ENCODE measurements at regions of chr19 and their contacts with region 1.

Region 1: DNA sequence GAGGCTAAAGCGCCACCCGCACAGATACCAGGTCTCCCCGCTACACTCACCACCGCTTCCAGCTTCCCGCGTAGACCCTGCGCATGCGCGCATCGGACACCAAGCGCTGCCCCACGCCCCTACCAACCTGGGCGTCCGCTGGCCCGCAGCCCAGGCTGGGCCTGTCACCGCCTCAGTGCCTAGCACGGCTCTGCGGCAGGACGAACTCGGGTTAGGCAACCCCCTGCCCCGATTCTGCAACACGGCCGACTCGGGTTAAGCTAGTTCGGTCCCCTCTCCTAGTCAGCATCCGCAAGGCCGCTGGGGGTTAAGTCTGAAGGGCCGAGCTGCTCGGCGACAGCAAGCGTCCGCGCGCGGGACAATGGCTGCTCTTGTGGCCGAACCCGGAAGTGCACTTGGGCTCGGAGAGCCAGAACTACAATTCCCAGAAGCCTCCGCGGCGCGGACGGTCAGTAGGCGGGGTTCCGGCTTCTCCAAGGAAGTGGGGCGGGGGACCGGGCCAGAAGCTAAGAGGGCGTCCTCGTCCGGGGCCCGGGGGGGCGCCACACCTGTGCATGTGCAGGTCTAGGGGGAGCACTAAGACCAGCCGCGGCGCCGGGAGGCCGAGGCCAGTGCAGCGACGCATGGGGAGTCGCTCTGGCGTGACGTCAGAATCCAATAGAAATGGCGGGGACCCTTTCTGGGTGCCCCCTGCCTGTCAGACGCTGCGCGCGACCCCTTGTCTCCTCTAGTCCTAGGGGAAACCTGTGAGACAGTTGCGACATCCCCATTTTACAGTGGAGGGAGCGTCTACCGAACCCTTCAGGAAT is at the start of gene ZNF180:
- DNase-seq: peak; percentile 97
- ATAC-seq: peak; percentile 88
- H3K4me3 Mint-ChIP-seq: peak within 1 kb of the TSS; percentile 91
- H3K27ac Mint-ChIP-seq: peak within 1 kb of the TSS; percentile 94
- H3K4me1 Mint-ChIP-seq: peaks cover 28% of the 10 kb centered on the region
- H3K27me3 Mint-ChIP-seq: peaks cover 5% of the 10 kb centered on the region
- total RNA-seq, gene ZNF180: 5.5 to 7.7 TPM

Region 2: DNA sequence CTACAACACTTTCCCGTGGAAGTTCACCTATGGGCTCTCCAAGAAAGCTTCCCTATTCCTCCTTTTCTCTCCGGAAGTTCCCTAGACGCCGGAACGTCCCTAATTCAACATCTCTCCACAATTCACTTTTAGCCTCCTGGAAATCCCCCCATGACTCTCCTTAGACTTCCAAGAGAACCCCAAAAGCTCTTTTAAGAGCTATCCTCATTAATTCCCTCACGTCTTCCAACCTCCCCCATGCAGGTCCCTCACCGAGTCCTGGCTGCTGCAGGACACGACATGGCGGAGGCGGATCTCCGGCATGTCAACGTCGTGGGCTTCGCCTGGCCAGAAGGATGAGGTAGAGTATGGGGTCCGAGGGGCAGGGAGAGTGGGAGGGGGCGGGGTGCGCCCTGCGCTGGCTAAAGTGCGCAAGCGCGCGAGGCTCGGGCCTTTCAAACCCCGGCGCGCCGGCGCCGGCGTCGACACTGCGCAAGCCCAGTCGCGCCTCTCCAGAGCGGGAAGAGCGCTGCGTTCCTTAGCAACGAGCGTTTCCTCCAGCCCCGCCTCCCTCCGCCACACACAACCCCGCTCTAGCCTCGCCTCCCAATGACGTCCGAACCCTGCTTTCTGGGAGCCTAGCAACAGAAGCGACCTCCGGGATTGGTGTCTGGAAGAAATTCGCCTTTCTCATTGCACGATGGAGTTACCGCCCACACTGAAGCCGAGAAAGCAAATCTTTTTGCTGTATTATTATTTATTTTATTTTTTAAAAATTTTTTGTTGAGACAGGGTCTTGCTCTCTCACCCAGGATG is 925.0 kb before region 1 on chr19 and contains the starts of genes PINLYP and XRCC1:
- CTCF ChIA-PET with region 1: no interaction called
- POLR2A ChIA-PET with region 1: no interaction called
- intact Hi-C with region 1: no loop called
- DNase-seq: peak; percentile 99
- ATAC-seq: peak; percentile 99
- H3K4me3 Mint-ChIP-seq: peak within 1 kb of the TSS; percentile 87
- H3K27ac Mint-ChIP-seq: peak within 1 kb of the TSS; percentile 94
- H3K4me1 Mint-ChIP-seq: peaks cover 41% of the 10 kb centered on the region
- H3K27me3 Mint-ChIP-seq: no peaks in the 10 kb centered on the region
- total RNA-seq, gene PINLYP: 3.5 to 3.6 TPM
- total RNA-seq, gene XRCC1: 31.6 to 40.0 TPM

Region 3: DNA sequence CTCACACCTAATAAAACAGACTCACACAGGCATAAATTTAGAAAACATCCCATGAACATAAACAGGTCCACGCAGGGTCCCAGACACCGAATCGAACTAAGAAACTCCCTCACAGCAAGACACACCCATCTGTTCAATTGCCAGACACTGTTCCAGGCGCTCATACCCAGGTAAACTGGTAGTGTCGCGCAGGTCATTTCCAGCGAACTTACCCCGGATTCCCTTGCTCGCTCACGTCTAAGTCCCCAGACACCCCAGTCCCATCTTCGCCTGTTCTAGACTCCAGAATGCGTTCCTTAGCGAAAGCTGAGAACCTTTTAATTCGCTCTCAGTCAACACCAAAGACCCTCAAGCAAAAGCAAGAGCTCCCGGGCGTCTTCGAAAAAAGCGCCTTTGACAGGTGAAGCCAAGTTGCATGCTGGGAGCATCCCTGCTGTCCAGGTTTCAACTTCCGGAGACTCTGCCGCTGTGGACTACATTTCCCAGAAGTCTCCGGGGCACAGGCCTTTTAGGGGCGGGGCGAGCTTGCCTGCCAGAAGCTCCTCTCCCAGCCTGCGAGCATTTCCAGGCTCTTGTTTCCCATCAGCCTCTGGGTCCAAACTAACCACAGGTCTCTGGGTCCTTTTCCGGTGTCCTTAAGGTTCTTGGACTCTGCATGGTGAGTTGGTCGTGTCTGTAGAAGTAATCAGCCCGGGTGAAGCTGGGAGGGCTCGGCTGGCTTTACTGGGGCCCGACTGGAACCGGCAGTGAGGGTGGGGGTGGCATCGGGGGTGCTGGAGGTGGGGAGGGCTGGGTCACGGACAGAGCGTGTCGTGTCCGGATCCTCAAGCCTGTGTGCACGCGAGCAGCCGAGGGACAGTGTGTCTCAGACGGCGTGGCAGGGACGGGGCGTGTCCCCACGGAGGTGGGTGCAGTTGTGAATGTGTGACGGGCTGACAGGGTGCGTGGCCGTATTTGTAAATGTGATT is 673.3 kb before region 1 on chr19 and contains the start of gene ZNF283:
- CTCF ChIA-PET with region 1: no interaction called
- POLR2A ChIA-PET with region 1: no interaction called
- intact Hi-C with region 1: loop called in 1 of 2 experiments (anchors 1 kb)
- DNase-seq: peak; percentile 92
- ATAC-seq: peak; percentile 99
- H3K4me3 Mint-ChIP-seq: peak within 1 kb of the TSS; percentile 87
- H3K27ac Mint-ChIP-seq: peak within 1 kb of the TSS; percentile 60
- H3K4me1 Mint-ChIP-seq: peaks cover 14% of the 10 kb centered on the region
- H3K27me3 Mint-ChIP-seq: peaks cover 5% of the 10 kb centered on the region
- total RNA-seq, gene ZNF283: 5.4 to 6.8 TPM

Region 4: DNA sequence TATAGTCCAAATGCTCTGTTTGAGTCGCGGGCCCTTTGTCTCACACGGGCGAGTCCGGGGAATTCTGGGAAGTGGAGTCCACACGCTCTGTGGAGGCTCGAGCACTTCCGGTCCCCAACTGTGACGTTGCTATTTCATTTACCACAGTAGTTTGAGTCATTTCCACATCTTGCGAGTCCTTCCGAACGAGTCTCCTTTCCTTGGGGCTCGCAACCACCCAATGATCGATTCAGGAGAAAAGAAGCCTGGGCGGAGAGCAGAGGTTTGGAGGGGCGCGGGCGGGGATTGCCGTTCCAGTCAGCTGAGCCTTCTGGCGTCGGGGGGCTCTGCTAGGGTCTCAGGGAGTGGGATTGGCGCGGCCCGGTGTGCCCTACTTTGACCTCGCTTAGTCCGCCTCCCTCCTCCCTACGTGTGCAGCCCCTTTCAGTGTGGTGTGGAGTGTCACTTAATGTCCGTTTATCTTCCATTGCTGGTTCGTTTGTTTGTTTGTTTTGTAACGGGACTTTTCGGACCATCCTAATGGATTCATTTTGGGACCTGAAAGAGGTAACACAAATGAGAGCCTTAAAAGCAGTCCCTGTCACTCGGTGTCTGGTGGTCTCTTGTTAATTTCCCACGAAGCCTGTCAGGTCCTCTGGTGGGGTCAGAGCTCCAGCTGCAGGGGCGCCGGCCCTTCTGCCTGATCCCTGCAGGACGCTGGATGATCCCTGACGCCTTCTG is 475.0 kb before region 1 on chr19 and contains the start of gene ZNF222:
- CTCF ChIA-PET with region 1: no interaction called
- POLR2A ChIA-PET with region 1: no interaction called
- intact Hi-C with region 1: loop called in 1 of 2 experiments (anchors 1 kb)
- DNase-seq: peak; percentile 90
- ATAC-seq: peak; percentile 99
- H3K4me3 Mint-ChIP-seq: peak within 1 kb of the TSS; percentile 94
- H3K27ac Mint-ChIP-seq: peak within 1 kb of the TSS; percentile 93
- H3K4me1 Mint-ChIP-seq: peaks cover 20% of the 10 kb centered on the region
- H3K27me3 Mint-ChIP-seq: peaks cover 2% of the 10 kb centered on the region
- total RNA-seq, gene ZNF222: 1.5 to 2.9 TPM

Region 5: GRCh38 chr19:44141191-44142058 is 358.9 kb before region 1 on chr19 and contains the start of gene ZNF234:
- CTCF ChIA-PET with region 1: no interaction called
- POLR2A ChIA-PET with region 1: no interaction called
- intact Hi-C with region 1: loop called in 1 of 2 experiments (anchors 1 kb)
- DNase-seq: peak; percentile 82
- ATAC-seq: peak; percentile 92
- H3K4me3 Mint-ChIP-seq: peak within 1 kb of the TSS; percentile 92
- H3K27ac Mint-ChIP-seq: peak within 1 kb of the TSS; percentile 94
- H3K4me1 Mint-ChIP-seq: peaks cover 12% of the 10 kb centered on the region
- H3K27me3 Mint-ChIP-seq: no peaks in the 10 kb centered on the region
- total RNA-seq, gene ZNF234: 7.9 to 10.4 TPM

Region 6: DNA sequence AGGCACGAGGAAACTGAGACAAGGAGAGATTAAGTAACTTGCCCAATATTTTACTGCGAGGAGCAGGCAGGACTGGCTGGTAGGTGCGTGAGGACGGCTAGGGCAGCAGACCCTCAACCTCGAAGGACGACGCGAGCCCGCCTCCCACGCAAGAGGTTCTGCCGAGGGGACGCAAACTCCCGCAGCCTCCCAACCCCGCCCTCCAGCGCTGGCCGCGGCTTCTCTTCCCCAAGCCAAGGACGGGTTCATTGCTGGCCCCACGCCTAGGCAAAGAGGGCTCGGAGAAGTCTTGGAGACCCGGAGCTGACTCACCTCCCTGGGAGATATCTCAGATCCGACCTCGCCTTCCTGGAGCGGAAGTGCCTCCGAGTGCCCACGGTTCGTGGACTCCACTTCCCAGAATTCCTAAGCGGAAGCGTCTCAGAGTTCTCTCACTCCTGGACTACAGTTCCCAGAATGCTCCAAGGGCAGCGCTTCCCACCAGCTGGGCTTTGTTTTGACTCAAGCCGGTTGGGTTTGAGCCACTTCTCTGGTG is 195.6 kb before region 1 on chr19 and contains the start of gene ZNF235:
- CTCF ChIA-PET with region 1: no interaction called
- POLR2A ChIA-PET with region 1: no interaction called
- intact Hi-C with region 1: loop called in 1 of 2 experiments (anchors 1 kb)
- DNase-seq: peak; percentile 87
- ATAC-seq: peak; percentile 97
- H3K4me3 Mint-ChIP-seq: peak within 1 kb of the TSS; percentile 83
- H3K27ac Mint-ChIP-seq: peak within 1 kb of the TSS; percentile 64
- H3K4me1 Mint-ChIP-seq: peaks cover 12% of the 10 kb centered on the region
- H3K27me3 Mint-ChIP-seq: no peaks in the 10 kb centered on the region
- total RNA-seq, gene ZNF235: 2.1 to 2.7 TPM

Region 7: DNA sequence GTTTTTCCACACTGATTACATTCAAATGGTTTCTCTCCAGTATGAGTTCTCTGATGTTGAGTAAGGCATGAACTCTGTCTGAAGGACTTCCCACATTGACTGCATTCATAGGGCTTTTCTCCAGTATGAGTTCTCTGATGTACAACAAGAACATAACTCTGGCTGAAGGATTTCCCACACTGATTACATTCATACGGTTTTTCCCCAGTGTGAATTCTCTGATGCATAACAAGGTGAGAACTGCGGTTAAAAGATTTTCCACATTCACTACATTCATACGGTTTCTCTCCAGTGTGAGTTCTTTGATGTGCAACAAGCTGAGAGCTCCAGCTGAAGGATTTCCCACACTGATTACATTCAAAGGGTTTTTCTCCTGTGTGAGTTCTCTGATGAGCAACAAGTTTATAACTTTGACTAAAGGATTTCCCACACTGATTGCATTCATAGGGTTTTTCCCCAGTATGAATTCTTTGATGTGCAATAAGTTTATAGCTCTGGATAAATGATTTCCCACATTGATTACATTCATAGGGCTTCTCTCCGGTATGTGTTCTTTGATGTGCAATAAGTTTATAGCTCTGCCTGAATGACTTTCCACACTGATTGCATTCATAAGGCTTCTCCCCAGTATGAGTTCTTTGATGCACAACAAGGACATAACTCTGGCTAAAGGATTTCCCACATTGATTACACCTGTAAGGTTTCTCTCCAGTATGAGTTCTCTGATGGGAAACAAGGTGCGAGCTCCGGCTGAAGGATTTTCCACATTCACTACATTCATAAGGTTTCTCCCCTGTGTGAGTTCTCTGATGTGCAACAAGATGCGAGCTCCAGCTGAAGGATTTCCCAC is 23.6 kb before region 1 on chr19:
- CTCF ChIA-PET with region 1: no interaction called
- POLR2A ChIA-PET with region 1: interaction called, 3 read pairs
- intact Hi-C with region 1: loop called in 1 of 2 experiments (anchors 2 kb)
- DNase-seq: no peak
- ATAC-seq: no peak
- H3K4me3 Mint-ChIP-seq: no peak overlapping the region
- H3K27ac Mint-ChIP-seq: no peak overlapping the region
- H3K4me1 Mint-ChIP-seq: no peaks in the 10 kb centered on the region
- H3K27me3 Mint-ChIP-seq: no peaks in the 10 kb centered on the region

Measured in activated CD4-positive, alpha-beta T cell treated with anti-CD3 and anti-CD28 coated beads for 36 hours (primary cell).